Astrocyte of the cerebellum (primary cell): ENCODE measurements at regions of chr2 and their contacts with region 1.

Region 1: GRCh38 chr2:44649381-44649780 is 287.6 kb downstream of the CAMKMT start:
- DNase-seq: no peak
- H3K4me3 ChIP-seq: no peak overlapping the region
- CTCF ChIP-seq: no peak

Region 2: GRCh38 chr2:44596537-44597320 is 52.7 kb before region 1 on chr2:
- in situ Hi-C with region 1: loop called (anchors 5 kb)
- DNase-seq: no peak
- H3K4me3 ChIP-seq: no peak overlapping the region
- CTCF ChIP-seq: no peak

Region 3: GRCh38 chr2:44612276-44612675 is 37.1 kb before region 1 on chr2:
- in situ Hi-C with region 1: no loop called
- DNase-seq: no peak
- H3K4me3 ChIP-seq: no peak overlapping the region
- CTCF ChIP-seq: no peak

Region 4: GRCh38 chr2:44713170-44713569 is 63.8 kb after region 1 on chr2:
- in situ Hi-C with region 1: loop called (anchors 5 kb)
- DNase-seq: no peak
- H3K4me3 ChIP-seq: no peak overlapping the region
- CTCF ChIP-seq: no peak